Right cardiac atrium (tissue), 5 donors: ENCODE measurements at regions of chr5 and their contacts with region 1.

Region 1: GRCh38 chr5:112757468-112758208 is 20.0 kb downstream of the APC start:
- DNase-seq: no peak
- ATAC-seq: peak; percentile 77
- H3K4me3 ChIP-seq: no peak overlapping the region
- H3K27ac ChIP-seq: peak overlapping the region; percentile 38
- H3K4me1 ChIP-seq: no peaks in the 10 kb centered on the region
- H3K27me3 ChIP-seq: no peaks in the 10 kb centered on the region

Region 2: DNA sequence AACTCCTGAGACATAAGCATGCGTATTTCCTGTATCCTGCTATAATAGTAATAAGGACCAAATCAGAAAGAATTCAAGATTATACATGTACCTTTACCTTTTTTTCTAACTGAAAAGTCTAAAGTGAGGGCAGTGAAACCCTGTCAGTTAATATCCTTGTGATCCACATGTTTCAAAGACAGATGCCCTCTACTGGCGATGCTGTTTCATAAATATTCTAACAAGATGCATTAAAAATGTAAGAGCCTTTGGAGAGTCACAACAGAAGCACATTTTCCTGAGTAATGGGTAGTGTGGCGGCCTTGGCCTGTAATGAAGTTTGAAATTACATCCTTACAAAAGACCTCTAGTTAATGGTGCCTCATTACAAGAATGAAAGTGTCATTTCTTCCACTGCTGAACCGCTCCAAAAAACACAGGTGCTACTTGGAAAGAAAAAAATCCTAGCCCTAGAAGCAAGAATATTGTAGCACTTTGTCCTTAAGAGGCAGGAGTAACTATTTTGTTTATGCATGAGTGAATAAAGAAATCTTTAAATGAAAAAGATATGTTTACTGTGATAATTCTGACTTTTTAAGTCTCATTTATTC is 571.1 kb before region 1 on chr5:
- intact Hi-C with region 1: loop called in 1 of 4 experiments (anchors 10 kb)
- DNase-seq: no peak
- ATAC-seq: no peak
- H3K4me3 ChIP-seq: no peak overlapping the region
- H3K27ac ChIP-seq: no peak overlapping the region
- H3K4me1 ChIP-seq: peaks cover 3% of the 10 kb centered on the region
- H3K27me3 ChIP-seq: no peaks in the 10 kb centered on the region

Region 3: DNA sequence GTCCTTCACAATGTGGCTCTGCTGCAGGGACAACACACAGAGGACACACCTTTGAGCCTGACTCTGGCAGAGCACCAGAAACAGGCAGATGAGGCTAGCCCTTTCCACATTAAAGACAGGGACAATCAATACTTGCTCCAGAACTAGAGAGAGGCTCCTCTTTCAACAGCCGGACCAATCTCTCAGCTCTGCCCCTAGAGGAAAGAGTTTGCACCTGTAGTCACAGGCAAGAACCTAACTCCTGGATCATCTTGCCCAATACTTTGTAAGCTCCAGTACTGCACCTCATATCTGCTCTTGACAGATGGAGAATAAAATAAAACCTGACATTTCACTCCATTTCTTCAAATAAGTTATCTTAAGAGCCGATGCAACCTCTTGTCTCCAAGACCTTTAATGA is 390.7 kb before region 1 on chr5:
- intact Hi-C with region 1: no loop called
- DNase-seq: no peak
- ATAC-seq: peak in 1 of 2 donors; percentile 62
- H3K4me3 ChIP-seq: no peak overlapping the region
- H3K27ac ChIP-seq: no peak overlapping the region
- H3K4me1 ChIP-seq: peaks cover 9% of the 10 kb centered on the region
- H3K27me3 ChIP-seq: no peaks in the 10 kb centered on the region

Region 4: DNA sequence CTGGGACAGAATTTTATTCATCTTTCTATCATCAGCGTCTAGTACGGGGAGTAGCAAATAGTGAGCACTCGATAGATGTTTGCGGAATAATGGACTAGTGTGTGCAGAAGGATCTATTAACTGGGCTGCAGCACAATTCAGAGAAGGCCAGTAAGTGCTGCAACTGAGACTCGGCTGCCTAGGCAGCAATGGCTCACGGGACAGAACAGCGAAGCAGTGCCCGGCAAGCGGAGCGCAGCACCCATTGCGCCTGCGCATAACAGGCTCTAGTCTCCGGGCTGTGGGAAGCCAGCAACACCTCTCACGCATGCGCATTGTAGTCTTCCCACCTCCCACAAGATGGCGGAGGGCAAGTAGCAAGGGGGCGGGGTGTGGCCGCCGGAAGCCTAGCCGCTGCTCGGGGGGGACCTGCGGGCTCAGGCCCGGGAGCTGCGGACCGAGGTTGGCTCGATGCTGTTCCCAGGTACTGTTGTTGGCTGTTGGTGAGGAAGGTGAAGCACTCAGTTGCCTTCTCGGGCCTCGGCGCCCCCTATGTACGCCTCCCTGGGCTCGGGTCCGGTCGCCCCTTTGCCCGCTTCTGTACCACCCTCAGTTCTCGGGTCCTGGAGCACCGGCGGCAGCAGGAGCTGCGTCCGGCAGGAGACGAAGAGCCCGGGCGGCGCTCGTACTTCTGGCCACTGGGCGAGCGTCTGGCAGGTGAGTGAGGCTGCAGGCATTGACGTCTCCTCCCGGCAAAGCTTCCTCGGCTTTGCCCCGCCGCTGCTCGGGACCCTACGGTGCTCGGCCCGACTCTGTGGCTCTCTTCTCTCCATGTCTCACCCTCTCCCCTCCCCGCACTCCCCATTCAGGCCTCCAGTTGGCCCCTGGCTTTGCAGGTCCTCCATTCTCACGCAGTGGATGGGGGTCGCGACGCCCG is 50.2 kb before region 1 on chr5:
- intact Hi-C with region 1: loop called in 2 of 4 experiments (anchors 10 kb)
- DNase-seq: peak; percentile 99
- ATAC-seq: peak; percentile 96 to 97
- H3K4me3 ChIP-seq: peak overlapping the region; percentile 78
- H3K27ac ChIP-seq: peak overlapping the region; percentile 70
- H3K4me1 ChIP-seq: peaks cover 9% of the 10 kb centered on the region
- H3K27me3 ChIP-seq: no peaks in the 10 kb centered on the region

Region 5: DNA sequence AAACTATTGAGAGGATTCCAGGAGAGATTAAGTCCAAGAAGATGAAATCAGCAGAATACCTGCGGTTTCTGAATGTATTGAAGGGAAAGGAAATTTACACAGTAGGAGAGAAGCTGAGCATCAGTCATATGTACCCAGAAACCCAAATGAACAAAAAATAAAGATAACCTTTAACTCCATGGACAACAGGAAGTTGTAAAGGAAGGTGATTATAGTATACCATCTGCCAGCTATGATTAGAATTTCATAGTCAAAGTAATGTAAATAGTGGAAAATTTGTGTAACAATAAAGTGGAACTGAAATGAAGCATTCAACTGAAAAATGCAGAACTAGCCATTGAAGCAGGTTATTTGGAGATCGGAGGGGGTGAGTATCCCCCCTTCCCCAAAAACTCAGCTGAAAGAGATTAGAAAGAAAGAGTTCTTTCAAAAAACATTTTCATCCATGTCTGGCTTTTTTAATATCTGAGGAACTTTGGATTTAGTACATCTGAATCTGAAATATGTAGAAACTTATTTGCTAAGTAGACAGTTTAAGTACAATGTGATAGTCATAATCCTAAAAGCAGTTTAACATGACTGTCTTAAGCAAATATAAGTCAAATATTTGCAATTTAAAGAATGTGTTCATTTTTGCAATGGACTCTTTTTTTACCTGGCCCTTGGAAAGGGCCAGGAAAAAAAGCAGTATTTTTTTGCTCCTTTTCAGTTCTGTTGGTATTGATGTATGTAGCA is 38.5 kb after region 1 on chr5:
- intact Hi-C with region 1: no loop called
- DNase-seq: no peak
- ATAC-seq: no peak
- H3K4me3 ChIP-seq: no peak overlapping the region
- H3K27ac ChIP-seq: no peak overlapping the region
- H3K4me1 ChIP-seq: peaks cover 4% of the 10 kb centered on the region
- H3K27me3 ChIP-seq: no peaks in the 10 kb centered on the region